CD14-positive monocyte (primary cell): ENCODE measurements at regions of chr12 and their contacts with region 1.

Region 1: GRCh38 chr12:57124259-57124877 is 3.9 kb upstream of the LRP1 start:
- DNase-seq: peak; percentile 71 to 81 (median 78)
- H3K4me3 ChIP-seq: no peak overlapping the region
- H3K4me3 Mint-ChIP-seq: peak overlapping the region; percentile 34 to 54
- H3K27ac ChIP-seq: no peak overlapping the region
- H3K27ac Mint-ChIP-seq: peak overlapping the region in 1 of 7 donors; percentile 48
- H3K4me1 ChIP-seq: peaks cover 13 to 21% of the 10 kb centered on the region in 2 donors
- H3K4me1 Mint-ChIP-seq: peaks cover 16% of the 10 kb centered on the region
- H3K27me3 ChIP-seq: peaks cover 0 to 16% of the 10 kb centered on the region in 2 donors
- H3K27me3 Mint-ChIP-seq: peaks cover 5 to 28% (median 24%) of the 10 kb centered on the region in 3 donors
- CTCF ChIP-seq: peak; percentile 96

Region 2: GRCh38 chr12:57164966-57165625 is 40.7 kb after region 1 on chr12:
- intact Hi-C with region 1: loop called (anchors 5 kb)
- DNase-seq: no peak
- H3K4me3 ChIP-seq: no peak overlapping the region
- H3K4me3 Mint-ChIP-seq: no peak overlapping the region
- H3K27ac ChIP-seq: no peak overlapping the region
- H3K27ac Mint-ChIP-seq: peak overlapping the region in 5 of 7 donors; percentile 10 to 69 (median 44)
- H3K4me1 ChIP-seq: peaks cover 22 to 42% of the 10 kb centered on the region in 2 donors
- H3K4me1 Mint-ChIP-seq: peaks cover 50% of the 10 kb centered on the region
- H3K27me3 ChIP-seq: no peaks in the 10 kb centered on the region
- H3K27me3 Mint-ChIP-seq: peaks cover 0 to 7% (median 5%) of the 10 kb centered on the region in 3 donors
- CTCF ChIP-seq: no peak

Region 3: DNA sequence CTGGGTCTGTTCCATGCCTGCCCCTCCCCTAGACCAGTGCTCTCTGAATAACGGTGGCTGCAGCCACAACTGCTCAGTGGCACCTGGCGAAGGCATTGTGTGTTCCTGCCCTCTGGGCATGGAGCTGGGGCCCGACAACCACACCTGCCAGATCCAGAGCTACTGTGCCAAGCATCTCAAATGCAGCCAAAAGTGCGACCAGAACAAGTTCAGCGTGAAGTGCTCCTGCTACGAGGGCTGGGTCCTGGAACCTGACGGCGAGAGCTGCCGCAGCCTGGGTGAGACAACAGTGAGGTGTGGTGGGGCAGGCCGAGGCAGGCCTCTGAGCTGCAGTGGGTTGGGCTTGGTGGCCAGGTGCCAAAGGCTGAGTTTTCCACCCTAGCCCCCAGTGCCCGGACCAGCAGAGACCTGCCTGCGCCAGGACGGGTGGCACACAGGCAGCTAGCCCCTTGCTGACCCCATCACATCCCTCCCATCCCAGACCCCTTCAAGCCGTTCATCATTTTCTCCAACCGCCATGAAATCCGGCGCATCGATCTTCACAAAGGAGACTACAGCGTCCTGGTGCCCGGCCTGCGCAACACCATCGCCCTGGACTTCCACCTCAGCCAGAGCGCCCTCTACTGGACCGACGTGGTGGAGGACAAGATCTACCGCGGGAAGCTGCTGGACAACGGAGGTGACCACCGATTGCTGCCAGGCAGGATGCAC is 51.2 kb after region 1 on chr12:
- intact Hi-C with region 1: loop called (anchors 1 to 5 kb)
- DNase-seq: peak; percentile 60 to 71 (median 61)
- H3K4me3 ChIP-seq: no peak overlapping the region
- H3K4me3 Mint-ChIP-seq: no peak overlapping the region
- H3K27ac ChIP-seq: no peak overlapping the region
- H3K27ac Mint-ChIP-seq: peak overlapping the region in 4 of 7 donors; percentile 10 to 80 (median 48)
- H3K4me1 ChIP-seq: no peaks in the 10 kb centered on the region
- H3K4me1 Mint-ChIP-seq: peaks cover 12% of the 10 kb centered on the region
- H3K27me3 ChIP-seq: no peaks in the 10 kb centered on the region
- H3K27me3 Mint-ChIP-seq: peaks cover 3 to 7% (median 7%) of the 10 kb centered on the region in 3 donors
- CTCF ChIP-seq: peak; percentile 79